B cell (primary cell): ENCODE measurements at regions of chr15 and their contacts with region 1.

Region 1: DNA sequence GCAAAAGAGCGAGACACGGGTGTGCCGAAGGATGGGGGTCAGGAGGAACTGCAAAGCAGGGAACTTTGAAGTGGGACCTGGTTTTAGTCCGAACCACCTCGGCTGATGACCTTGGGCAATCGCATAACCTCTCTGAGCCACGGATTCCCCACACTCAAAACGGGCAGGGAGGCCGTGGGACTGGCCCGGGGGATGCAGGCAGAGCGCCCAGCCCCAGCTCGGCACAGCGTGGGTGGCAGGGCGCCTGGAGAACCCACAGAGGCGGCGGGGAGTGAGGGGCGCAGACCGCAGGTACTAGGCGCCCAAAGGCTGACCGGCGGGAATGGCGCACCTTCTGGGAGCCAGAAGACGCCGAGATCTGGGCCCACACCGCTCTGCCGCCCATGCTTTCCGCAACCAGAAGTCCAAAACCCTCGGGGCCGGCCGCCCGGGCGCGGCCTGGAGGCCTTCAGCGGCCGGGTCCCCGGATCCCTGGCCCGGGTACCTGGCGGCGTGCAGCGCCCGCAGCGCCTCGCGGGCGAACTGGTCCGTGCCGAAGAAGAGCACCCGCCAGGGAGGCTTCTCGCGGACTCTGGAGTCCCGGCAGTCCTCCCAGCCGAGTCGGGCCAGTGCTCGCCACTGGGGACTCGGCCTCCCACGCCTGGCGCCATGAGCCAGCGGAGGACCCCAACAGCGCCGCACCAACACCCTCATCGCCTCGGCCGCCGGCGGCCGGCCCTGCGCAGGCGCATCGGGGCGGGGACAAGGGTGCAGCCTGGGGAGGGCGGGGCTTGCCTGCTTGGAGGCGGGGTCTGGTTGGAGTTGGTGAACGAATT is at the start of gene MTFMT:
- DNase-seq: peak; percentile 90
- ATAC-seq: peak; percentile 95
- H3K4me3 ChIP-seq: peak within 1 kb of the TSS; percentile 64 to 86 (median 80)
- H3K4me3 Mint-ChIP-seq: peak within 1 kb of the TSS; percentile 87
- H3K27ac ChIP-seq: peak within 1 kb of the TSS in 1 of 2 donors; percentile 68
- H3K27ac Mint-ChIP-seq: peak within 1 kb of the TSS; percentile 78
- H3K4me1 ChIP-seq: peaks cover 20 to 26% of the 10 kb centered on the region in 2 donors
- H3K4me1 Mint-ChIP-seq: peaks cover 27% of the 10 kb centered on the region
- H3K27me3 ChIP-seq: peaks cover 0 to 3% (median 0%) of the 10 kb centered on the region in 4 experiments
- H3K27me3 Mint-ChIP-seq: peaks cover 6% of the 10 kb centered on the region
- CTCF ChIP-seq: no peak
- total RNA-seq, gene MTFMT: 14.3 and 15.5 TPM in 2 replicates

Region 2: GRCh38 chr15:65049418-65049840 is 20.3 kb after region 1 on chr15:
- CTCF ChIA-PET with region 1: interaction called, 13 read pairs
- POLR2A ChIA-PET with region 1: no interaction called
- intact Hi-C with region 1: loop called (anchors 2 kb)
- DNase-seq: peak; percentile 96
- ATAC-seq: peak; percentile 98
- H3K4me3 ChIP-seq: peak overlapping the region; percentile 14 to 57 (median 34)
- H3K4me3 Mint-ChIP-seq: peak overlapping the region; percentile 81
- H3K27ac ChIP-seq: no peak overlapping the region
- H3K27ac Mint-ChIP-seq: peak overlapping the region; percentile 80
- H3K4me1 ChIP-seq: peaks cover 13 to 18% of the 10 kb centered on the region in 2 donors
- H3K4me1 Mint-ChIP-seq: peaks cover 15% of the 10 kb centered on the region
- H3K27me3 ChIP-seq: peaks cover 0 to 6% (median 0%) of the 10 kb centered on the region in 4 experiments
- H3K27me3 Mint-ChIP-seq: peaks cover 4% of the 10 kb centered on the region
- CTCF ChIP-seq: no peak

Region 3: DNA sequence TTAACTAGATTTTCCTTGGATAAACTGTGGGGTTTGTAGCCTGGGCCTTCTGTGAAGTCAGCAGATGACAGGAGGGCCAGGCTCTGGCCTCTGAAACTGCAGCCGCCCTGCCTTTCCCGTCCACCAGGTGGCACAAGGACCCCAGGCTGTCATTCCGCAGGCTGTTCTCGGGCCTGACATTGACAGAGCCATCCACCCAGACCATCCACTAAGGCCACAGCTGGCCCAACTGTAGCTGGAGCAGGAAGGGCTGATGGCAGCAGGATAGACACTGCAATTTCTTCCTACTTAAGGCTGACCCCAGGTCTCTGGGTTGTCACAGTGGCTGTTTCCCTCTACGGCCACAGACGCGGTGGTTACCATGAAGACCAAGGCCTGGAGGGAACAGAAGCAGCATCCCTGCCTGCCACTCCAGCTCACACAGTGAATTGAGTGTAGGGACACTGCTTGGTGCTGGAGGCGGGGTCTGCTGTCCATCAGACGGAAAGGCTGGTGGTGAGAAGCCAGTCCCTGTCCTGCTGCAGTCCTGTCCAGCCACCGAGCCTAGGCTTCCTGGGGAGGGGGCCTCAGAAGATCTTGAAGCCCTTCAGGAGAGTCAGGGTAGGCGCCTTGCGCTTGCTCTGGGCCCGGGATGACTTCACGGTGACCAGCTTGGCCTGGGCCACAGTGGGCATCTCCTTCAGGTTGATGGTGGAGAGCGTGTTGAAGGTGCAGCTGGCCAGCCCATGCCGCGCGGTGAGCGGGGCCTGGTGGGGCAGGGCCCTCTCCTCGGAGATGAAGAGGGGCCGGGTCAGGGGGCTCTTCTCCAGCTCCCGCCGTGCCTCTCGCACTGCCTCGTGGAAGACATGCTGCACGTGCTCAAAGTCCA is 25.4 kb after region 1 on chr15:
- CTCF ChIA-PET with region 1: interaction called, 13 read pairs
- POLR2A ChIA-PET with region 1: no interaction called
- intact Hi-C with region 1: loop called (anchors 2 kb)
- DNase-seq: peak; percentile 68
- ATAC-seq: peak; percentile 53
- H3K4me3 ChIP-seq: no peak overlapping the region
- H3K4me3 Mint-ChIP-seq: no peak overlapping the region
- H3K27ac ChIP-seq: no peak overlapping the region
- H3K27ac Mint-ChIP-seq: no peak overlapping the region
- H3K4me1 ChIP-seq: peaks cover 8 to 13% of the 10 kb centered on the region in 2 donors
- H3K4me1 Mint-ChIP-seq: peaks cover 11% of the 10 kb centered on the region
- H3K27me3 ChIP-seq: peaks cover 0 to 5% (median 0%) of the 10 kb centered on the region in 4 experiments
- H3K27me3 Mint-ChIP-seq: no peaks in the 10 kb centered on the region
- CTCF ChIP-seq: peak; percentile 76

Region 4: DNA sequence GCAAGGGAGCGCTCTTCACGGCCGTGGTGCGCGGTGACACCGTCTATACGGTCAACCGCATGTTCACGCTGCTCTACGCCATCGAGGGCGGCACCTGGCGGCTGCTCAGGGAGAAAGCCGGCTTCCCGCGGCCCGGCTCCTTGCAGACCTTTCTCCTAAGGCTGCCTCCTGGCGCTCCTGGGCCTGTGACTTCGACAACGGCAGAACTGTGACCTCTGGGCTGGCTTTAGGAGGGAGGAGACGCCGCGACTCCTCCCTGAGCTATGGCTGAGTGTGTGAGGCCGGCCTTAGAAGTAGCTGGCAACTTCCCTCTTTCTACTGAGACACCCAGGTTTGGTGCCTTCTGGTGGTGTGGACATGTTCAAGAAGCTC is 48.8 kb after region 1 on chr15:
- CTCF ChIA-PET with region 1: interaction called, 19 read pairs
- POLR2A ChIA-PET with region 1: no interaction called
- intact Hi-C with region 1: loop called (anchors 1 kb)
- DNase-seq: peak; percentile 62
- ATAC-seq: no peak
- H3K4me3 ChIP-seq: peak overlapping the region in 3 of 5 experiments; percentile 23 to 24 (median 24)
- H3K4me3 Mint-ChIP-seq: peak overlapping the region; percentile 63
- H3K27ac ChIP-seq: no peak overlapping the region
- H3K27ac Mint-ChIP-seq: no peak overlapping the region
- H3K4me1 ChIP-seq: peaks cover 0 to 6% of the 10 kb centered on the region in 2 donors
- H3K4me1 Mint-ChIP-seq: peaks cover 9% of the 10 kb centered on the region
- H3K27me3 ChIP-seq: peaks cover 0 to 34% (median 8%) of the 10 kb centered on the region in 4 experiments
- H3K27me3 Mint-ChIP-seq: peaks cover 49% of the 10 kb centered on the region
- CTCF ChIP-seq: peak; percentile 17

Region 5: DNA sequence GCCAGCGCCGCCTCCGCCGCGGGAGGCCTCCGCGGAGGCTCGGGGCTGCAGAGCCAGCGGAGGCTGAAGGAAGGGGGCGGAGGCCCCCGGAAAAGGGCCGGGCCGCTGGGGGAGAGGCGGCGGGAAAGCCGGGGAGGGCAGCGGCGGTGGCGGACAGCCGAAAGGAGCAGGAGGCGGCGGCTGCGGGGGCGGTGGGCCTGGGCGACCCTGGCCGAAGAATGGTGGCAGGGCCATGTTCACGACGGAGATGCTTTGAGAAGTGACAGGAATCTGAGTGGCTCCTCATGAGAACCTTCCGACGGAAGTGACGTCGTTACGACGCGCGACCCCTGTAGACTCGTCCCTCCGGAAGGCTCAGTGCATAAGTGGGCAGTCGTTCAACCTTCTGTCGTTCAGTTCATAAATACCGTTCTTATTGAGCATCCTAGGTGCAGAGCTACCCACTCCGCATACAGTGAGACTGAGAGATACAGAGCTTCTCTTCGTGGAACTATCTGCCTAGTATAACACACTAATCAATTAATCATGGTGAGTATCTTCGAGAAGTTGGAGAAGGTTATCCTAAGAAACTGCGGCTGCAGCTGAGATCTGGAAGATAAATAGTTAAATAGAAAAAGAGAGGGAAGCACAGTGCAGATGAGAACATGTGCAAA is 104.5 kb after region 1 on chr15 and contains the start of gene PDCD7:
- CTCF ChIA-PET with region 1: no interaction called
- POLR2A ChIA-PET with region 1: no interaction called
- intact Hi-C with region 1: loop called (anchors 1 kb)
- DNase-seq: peak; percentile 92
- ATAC-seq: peak; percentile 93
- H3K4me3 ChIP-seq: peak within 1 kb of the TSS; percentile 55 to 90 (median 67)
- H3K4me3 Mint-ChIP-seq: peak within 1 kb of the TSS; percentile 93
- H3K27ac ChIP-seq: peak within 1 kb of the TSS; percentile 53 to 88
- H3K27ac Mint-ChIP-seq: peak within 1 kb of the TSS; percentile 95
- H3K4me1 ChIP-seq: peaks cover 13 to 19% of the 10 kb centered on the region in 2 donors
- H3K4me1 Mint-ChIP-seq: peaks cover 28% of the 10 kb centered on the region
- H3K27me3 ChIP-seq: no peaks in the 10 kb centered on the region
- H3K27me3 Mint-ChIP-seq: no peaks in the 10 kb centered on the region
- CTCF ChIP-seq: no peak
- total RNA-seq, gene PDCD7: 43.2 and 47.0 TPM in 2 replicates

Region 6: DNA sequence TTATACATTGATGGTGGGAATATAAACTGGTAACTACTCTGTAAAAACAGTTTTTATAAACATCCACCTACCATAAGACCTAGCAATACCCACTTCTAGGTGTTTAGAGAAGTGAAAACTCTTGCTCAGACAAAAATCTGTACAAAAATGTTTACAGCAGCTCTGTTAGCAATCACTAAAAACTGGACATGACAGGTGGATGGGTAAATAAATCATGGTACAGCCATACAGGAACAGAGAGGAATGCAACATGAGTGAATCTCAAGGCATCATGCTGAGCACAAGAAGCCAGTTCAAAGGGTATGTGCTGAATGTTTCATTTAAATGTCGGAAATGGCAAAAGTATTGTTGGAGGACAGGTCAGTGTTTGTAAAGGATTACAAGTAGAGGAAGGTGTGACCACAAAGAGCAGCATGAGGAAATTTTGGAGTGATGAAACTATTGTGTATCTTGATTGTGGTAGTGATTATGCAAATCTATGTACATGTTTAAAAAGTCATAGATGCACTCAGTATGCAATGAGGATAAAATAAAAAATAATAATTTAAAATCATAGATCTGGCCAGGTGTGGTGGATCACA is 263.9 kb after region 1 on chr15:
- CTCF ChIA-PET with region 1: interaction called, 4 read pairs
- POLR2A ChIA-PET with region 1: interaction called, 11 read pairs
- intact Hi-C with region 1: loop called (anchors 1 kb)
- DNase-seq: no peak
- ATAC-seq: no peak
- H3K4me3 ChIP-seq: peak overlapping the region in 1 of 5 experiments; percentile 10
- H3K4me3 Mint-ChIP-seq: peak overlapping the region; percentile 11
- H3K27ac ChIP-seq: peak overlapping the region in 1 of 2 donors; percentile 39
- H3K27ac Mint-ChIP-seq: no peak overlapping the region
- H3K4me1 ChIP-seq: peaks cover 31 to 43% of the 10 kb centered on the region in 2 donors
- H3K4me1 Mint-ChIP-seq: peaks cover 35% of the 10 kb centered on the region
- H3K27me3 ChIP-seq: no peaks in the 10 kb centered on the region
- H3K27me3 Mint-ChIP-seq: no peaks in the 10 kb centered on the region
- CTCF ChIP-seq: no peak